ENCODE measurements at regions of chr1 and their contacts with region 1.

Region 1: DNA sequence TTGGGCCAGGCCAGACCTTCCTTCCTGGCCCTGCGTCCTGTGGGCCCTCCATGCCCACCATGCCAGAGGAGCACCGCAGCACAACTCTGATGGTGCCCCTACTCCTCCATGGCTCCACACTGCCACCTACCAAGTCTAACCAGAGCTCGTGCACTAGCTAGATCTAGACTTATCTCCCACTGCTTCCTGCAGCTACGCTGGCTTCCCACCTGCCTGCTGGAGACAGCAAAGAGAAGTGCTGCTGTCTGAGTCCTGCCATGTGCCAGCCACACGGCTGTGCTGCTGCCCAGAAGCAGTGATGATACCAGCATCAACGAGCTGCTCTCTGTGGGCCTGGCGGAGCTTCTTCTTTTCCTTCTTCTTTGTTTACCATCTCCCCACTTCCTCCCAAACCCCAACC is 4.5 kb downstream of the GUCA2B start:
- DNase-seq: no peak
- H3K4me3 ChIP-seq: no peak overlapping the region
- H3K27ac ChIP-seq: no peak overlapping the region
- H3K4me1 ChIP-seq: no peaks in the 10 kb centered on the region
- H3K27me3 ChIP-seq: no peaks in the 10 kb centered on the region
- CTCF ChIP-seq: peak in 2 of 3 experiments; percentile 19 to 43; a peak in 2 of 4 replicates
- EP300 ChIP-seq: no peak
- POLR2A ChIP-seq: no peak
- RAD21 ChIP-seq: peak; percentile 39 to 57; a peak in 3 of 4 replicates

Region 2: GRCh38 chr1:42122408-42122807 is 35.3 kb before region 1 on chr1:
- CTCF ChIA-PET with region 1: no interaction called
- POLR2A ChIA-PET with region 1: no interaction called
- DNase-seq: no peak
- H3K4me3 ChIP-seq: no peak overlapping the region
- H3K27ac ChIP-seq: no peak overlapping the region
- H3K4me1 ChIP-seq: no peaks in the 10 kb centered on the region; a peak in 1 of 7 replicates
- H3K27me3 ChIP-seq: no peaks in the 10 kb centered on the region; a peak in 1 of 7 replicates
- CTCF ChIP-seq: no peak
- EP300 ChIP-seq: no peak
- POLR2A ChIP-seq: no peak
- RAD21 ChIP-seq: no peak

Region 3: DNA sequence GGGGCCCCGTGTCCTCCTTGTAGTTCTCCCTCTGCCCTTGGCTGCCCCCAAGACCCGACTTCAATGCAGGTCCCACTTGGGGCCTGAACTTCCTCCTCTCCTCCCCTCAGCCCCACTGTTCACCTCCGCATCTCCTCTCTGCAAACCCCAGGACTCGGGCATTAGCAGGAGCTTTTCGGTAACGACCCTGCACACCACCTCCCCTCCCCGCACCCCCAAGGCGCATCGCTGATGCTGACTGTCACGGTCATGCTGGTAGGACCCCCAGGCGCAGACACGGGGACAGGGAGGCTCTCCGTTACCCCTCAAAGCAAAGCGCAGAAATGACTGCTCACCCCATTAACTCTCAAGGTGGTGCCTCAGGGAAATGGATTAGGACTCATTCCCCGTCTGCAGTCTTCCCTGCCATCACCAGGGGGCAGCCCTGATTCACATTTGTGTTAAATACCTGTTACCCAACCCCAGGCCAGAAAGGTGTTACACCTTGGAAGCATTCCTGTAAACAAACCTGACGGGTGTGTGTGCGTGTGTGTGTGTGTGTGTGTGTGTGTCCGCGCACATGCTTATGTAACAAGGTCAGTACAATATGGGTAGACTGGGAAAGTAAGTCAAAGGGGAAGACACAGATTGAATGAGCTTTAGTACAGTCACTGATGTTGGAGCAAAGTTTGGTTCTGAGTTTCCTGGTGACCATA is 10.9 kb before region 1 on chr1:
- CTCF ChIA-PET with region 1: interaction called, 14 read pairs
- POLR2A ChIA-PET with region 1: no interaction called
- DNase-seq: peak; percentile 62 to 93
- H3K4me3 ChIP-seq: no peak overlapping the region
- H3K27ac ChIP-seq: no peak overlapping the region
- H3K4me1 ChIP-seq: no peaks in the 10 kb centered on the region
- H3K27me3 ChIP-seq: no peaks in the 10 kb centered on the region; a peak in 2 of 7 replicates
- CTCF ChIP-seq: peak; percentile 83 to 92 (median 88)
- EP300 ChIP-seq: 0 out of 3 replicates have a peak, but pooled peaks of 1 of the 2 experiments have one; percentile 33
- POLR2A ChIP-seq: no peak
- RAD21 ChIP-seq: peak; percentile 95

Measured in H1 (cell line).